Activated B cell treated with CpG ODN at 0.5 μM for 24 hours (primary cell): ENCODE measurements at regions of chr14 and their contacts with region 1.

Region 1: GRCh38 chr14:23057757-23058653 is 685 bp upstream of the CDH24 start:
- DNase-seq: peak; percentile 80
- ATAC-seq: peak; percentile 73
- H3K4me3 Mint-ChIP-seq: peak overlapping the region; percentile 88
- H3K27ac Mint-ChIP-seq: no peak overlapping the region
- H3K4me1 Mint-ChIP-seq: peaks cover 18% of the 10 kb centered on the region
- H3K27me3 Mint-ChIP-seq: peaks cover 2% of the 10 kb centered on the region
- CTCF ChIP-seq: peak; percentile 58

Region 2: DNA sequence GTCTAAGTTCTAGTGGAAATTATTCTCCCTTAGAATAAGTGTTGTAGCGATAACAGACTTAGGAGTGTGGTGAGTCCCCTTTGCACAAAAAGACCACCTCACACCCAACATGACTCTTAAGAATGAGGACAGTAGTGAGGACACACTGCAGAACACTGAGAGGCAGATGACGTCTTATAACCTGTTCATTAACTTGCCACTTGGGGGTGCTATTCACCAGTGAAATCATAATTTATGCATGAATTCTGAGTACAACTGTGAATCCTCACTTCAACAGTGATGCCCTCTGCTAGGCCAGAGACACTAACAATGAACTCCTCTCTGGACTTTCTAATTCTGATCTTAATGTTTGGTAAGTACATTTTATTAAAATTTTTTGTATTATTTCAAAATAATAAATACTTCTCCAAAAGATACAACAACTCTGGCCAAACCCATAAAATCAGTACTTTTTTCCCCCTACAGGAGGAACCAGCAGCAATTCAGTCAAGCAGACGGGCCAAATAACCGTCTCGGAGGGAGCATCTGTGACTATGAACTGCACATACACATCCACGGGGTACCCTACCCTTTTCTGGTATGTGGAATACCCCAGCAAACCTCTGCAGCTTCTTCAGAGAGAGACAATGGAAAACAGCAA is 743.7 kb before region 1 on chr14:
- CTCF ChIA-PET with region 1: no interaction called
- POLR2A ChIA-PET with region 1: no interaction called
- intact Hi-C with region 1: loop called (anchors 10 kb)
- DNase-seq: no peak
- ATAC-seq: peak; percentile 95
- H3K4me3 Mint-ChIP-seq: no peak overlapping the region
- H3K27ac Mint-ChIP-seq: no peak overlapping the region
- H3K4me1 Mint-ChIP-seq: no peaks in the 10 kb centered on the region
- H3K27me3 Mint-ChIP-seq: no peaks in the 10 kb centered on the region
- CTCF ChIP-seq: no peak

Region 3: GRCh38 chr14:22872033-22872832 is 185.8 kb before region 1 on chr14:
- CTCF ChIA-PET with region 1: no interaction called
- POLR2A ChIA-PET with region 1: no interaction called
- intact Hi-C with region 1: loop called (anchors 5 kb)
- DNase-seq: peak; percentile 69
- ATAC-seq: peak; percentile 22
- H3K4me3 Mint-ChIP-seq: peak overlapping the region; percentile 89
- H3K27ac Mint-ChIP-seq: peak overlapping the region; percentile 92
- H3K4me1 Mint-ChIP-seq: peaks cover 33% of the 10 kb centered on the region
- H3K27me3 Mint-ChIP-seq: no peaks in the 10 kb centered on the region
- CTCF ChIP-seq: no peak

Region 4: GRCh38 chr14:22973217-22974032 is 84.6 kb before region 1 on chr14:
- CTCF ChIA-PET with region 1: interaction called, 50 read pairs
- POLR2A ChIA-PET with region 1: interaction called, 4 read pairs
- intact Hi-C with region 1: loop called (anchors 1 kb)
- DNase-seq: no peak
- ATAC-seq: peak; percentile 68
- H3K4me3 Mint-ChIP-seq: no peak overlapping the region
- H3K27ac Mint-ChIP-seq: no peak overlapping the region
- H3K4me1 Mint-ChIP-seq: peaks cover 5% of the 10 kb centered on the region
- H3K27me3 Mint-ChIP-seq: peaks cover 13% of the 10 kb centered on the region
- CTCF ChIP-seq: no peak

Region 5: GRCh38 chr14:23020143-23021128 is 37.6 kb before region 1 on chr14:
- CTCF ChIA-PET with region 1: interaction called, 3 read pairs
- POLR2A ChIA-PET with region 1: interaction called, 3 read pairs
- intact Hi-C with region 1: loop called (anchors 5 kb)
- DNase-seq: no peak
- ATAC-seq: no peak
- H3K4me3 Mint-ChIP-seq: no peak overlapping the region
- H3K27ac Mint-ChIP-seq: no peak overlapping the region
- H3K4me1 Mint-ChIP-seq: no peaks in the 10 kb centered on the region
- H3K27me3 Mint-ChIP-seq: no peaks in the 10 kb centered on the region
- CTCF ChIP-seq: no peak

Region 6: GRCh38 chr14:23068476-23069412 is 10.7 kb after region 1 on chr14:
- CTCF ChIA-PET with region 1: interaction called, 36 read pairs
- POLR2A ChIA-PET with region 1: interaction called, 9 read pairs
- intact Hi-C with region 1: loop called (anchors 1 kb)
- DNase-seq: no peak
- ATAC-seq: peak; percentile 85
- H3K4me3 Mint-ChIP-seq: peak overlapping the region; percentile 22
- H3K27ac Mint-ChIP-seq: peak overlapping the region; percentile 50
- H3K4me1 Mint-ChIP-seq: peaks cover 36% of the 10 kb centered on the region
- H3K27me3 Mint-ChIP-seq: no peaks in the 10 kb centered on the region
- CTCF ChIP-seq: peak; percentile 79